Keratinocyte (primary cell): ENCODE measurements at regions of chr9 and their contacts with region 1.

Region 1: GRCh38 chr9:108831536-108832500 is 24.0 kb downstream of the ACTL7B start:
- DNase-seq: no peak
- H3K4me3 ChIP-seq: no peak overlapping the region
- H3K27ac ChIP-seq: peak overlapping the region; percentile 55
- H3K4me1 ChIP-seq: peaks cover 55% of the 10 kb centered on the region
- H3K27me3 ChIP-seq: no peaks in the 10 kb centered on the region
- CTCF ChIP-seq: no peak

Region 2: GRCh38 chr9:108621991-108622855 is 209.6 kb before region 1 on chr9:
- dilution Hi-C with region 1: no loop called
- DNase-seq: no peak
- H3K4me3 ChIP-seq: no peak overlapping the region
- H3K27ac ChIP-seq: peak overlapping the region; percentile 15
- H3K4me1 ChIP-seq: peaks cover 34% of the 10 kb centered on the region
- H3K27me3 ChIP-seq: no peaks in the 10 kb centered on the region
- CTCF ChIP-seq: no peak

Region 3: DNA sequence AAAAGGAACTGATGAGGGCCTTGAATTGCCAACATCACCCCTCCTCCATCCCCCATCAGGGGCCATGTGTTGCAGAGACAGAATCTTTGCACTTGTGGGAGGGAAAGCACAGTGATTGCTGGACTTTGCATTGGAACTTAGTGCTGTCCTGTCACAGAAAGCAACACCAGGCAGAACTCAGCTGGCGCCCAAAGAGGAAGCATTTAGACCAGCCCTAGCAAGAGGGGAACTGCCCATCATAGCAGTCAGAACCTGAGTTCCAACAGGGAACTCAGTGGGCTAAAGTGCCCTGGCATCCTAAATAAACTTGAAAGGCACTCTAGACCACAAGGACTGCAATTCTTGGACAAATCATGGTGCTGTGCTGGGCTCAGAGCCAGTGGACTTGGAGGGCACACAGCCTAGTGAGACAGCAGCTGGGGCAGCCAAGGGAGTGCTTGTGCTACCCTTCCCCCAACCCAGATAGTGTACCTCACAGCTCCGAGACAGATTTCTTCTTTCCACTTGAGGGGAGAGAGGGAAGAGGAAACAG is 104.2 kb before region 1 on chr9:
- dilution Hi-C with region 1: no loop called
- DNase-seq: no peak
- H3K4me3 ChIP-seq: no peak overlapping the region
- H3K27ac ChIP-seq: no peak overlapping the region
- H3K4me1 ChIP-seq: peaks cover 2% of the 10 kb centered on the region
- H3K27me3 ChIP-seq: no peaks in the 10 kb centered on the region
- CTCF ChIP-seq: no peak

Region 4: DNA sequence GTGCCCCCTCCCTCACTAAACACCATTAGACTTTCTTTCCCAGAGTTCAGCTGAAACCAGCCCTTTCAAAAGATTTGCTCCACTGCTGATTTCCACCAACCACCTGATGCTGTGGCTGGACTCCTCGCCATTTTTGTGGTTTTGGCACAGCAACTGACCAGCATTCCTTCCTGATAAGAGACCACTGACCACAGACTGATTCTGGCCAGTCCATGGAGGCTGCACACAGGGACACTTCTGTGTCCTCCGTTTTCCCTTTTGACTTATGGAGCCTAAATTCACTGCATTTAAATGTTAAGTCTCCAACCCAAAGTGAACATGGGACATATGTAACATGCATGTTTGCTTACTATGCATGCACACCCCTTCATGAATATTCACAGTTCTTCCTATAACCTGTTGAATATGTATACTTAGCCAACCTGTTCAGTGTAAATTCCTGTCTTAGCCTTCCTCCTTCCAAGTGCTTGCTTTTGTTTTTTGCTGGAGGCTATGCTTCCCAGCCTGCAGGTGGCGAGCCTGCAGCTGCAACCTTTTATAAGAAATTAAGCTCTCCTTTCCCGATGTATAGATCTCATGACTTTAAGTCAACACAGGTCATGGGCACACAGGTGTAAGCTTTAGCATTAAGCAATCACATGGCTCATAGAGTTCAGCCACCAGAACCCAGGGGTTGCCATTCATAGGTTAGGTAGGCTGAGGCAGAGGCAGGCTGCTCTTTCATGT is 54.7 kb before region 1 on chr9:
- dilution Hi-C with region 1: loop called (anchors 5 kb)
- DNase-seq: no peak
- H3K4me3 ChIP-seq: no peak overlapping the region
- H3K27ac ChIP-seq: no peak overlapping the region
- H3K4me1 ChIP-seq: peaks cover 23% of the 10 kb centered on the region
- H3K27me3 ChIP-seq: no peaks in the 10 kb centered on the region
- CTCF ChIP-seq: peak; percentile 46 to 54 (median 50)

Region 5: DNA sequence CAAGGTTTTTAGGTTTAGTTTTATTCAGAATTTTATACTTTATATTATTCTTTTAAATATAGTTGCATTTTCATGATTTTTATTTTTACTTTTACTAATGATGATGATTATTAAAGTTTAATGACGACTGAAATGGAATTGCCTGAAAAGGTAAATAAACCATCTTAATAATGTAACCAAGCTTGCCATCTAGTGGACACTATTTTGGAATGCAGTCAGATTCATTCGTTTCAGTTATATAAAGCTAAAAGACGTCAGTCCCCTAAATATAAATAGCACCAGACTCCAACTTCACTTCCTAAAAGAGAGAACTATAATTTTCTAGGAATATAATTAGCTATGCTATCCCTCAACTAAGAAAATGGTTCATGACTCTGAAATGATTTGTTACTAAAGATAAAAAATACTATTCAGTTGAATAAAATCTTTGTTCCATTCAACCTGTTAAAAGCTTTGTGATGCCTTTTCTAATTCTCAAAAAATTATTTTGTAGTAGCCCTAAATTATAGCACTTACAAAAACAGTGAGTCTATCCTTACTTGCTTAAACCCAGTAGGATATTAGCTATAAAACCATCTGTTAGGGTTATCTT is 122.3 kb after region 1 on chr9:
- dilution Hi-C with region 1: no loop called
- DNase-seq: no peak
- H3K4me3 ChIP-seq: no peak overlapping the region
- H3K27ac ChIP-seq: no peak overlapping the region
- H3K4me1 ChIP-seq: no peaks in the 10 kb centered on the region
- H3K27me3 ChIP-seq: no peaks in the 10 kb centered on the region
- CTCF ChIP-seq: peak in 2 of 3 experiments; percentile 40 to 50